Common myeloid progenitor, CD34-positive (primary cell): ENCODE measurements at regions of chr22 and their contacts with region 1.

Region 1: GRCh38 chr22:41666661-41667258 is 21.9 kb downstream of the SNU13 start:
- DNase-seq: peak; percentile 89 to 95 (median 93)
- H3K4me3 ChIP-seq: peak overlapping the region in 4 of 7 experiments; percentile 32 to 73 (median 44)
- H3K27ac ChIP-seq: peak overlapping the region in 1 of 2 experiments; percentile 68
- H3K4me1 ChIP-seq: peaks cover 0 to 9% (median 7%) of the 10 kb centered on the region in 4 experiments
- H3K27me3 ChIP-seq: no peaks in the 10 kb centered on the region

Region 2: GRCh38 chr22:41656556-41656955 is 10.2 kb before region 1 on chr22:
- CTCF ChIA-PET with region 1: interaction called, 22 read pairs
- POLR2A ChIA-PET with region 1: no interaction called
- DNase-seq: no peak
- H3K4me3 ChIP-seq: no peak overlapping the region
- H3K27ac ChIP-seq: no peak overlapping the region
- H3K4me1 ChIP-seq: no peaks in the 10 kb centered on the region
- H3K27me3 ChIP-seq: no peaks in the 10 kb centered on the region

Region 3: GRCh38 chr22:41681616-41682015 is 14.9 kb after region 1 on chr22:
- CTCF ChIA-PET with region 1: interaction called, 12 read pairs
- POLR2A ChIA-PET with region 1: no interaction called
- DNase-seq: peak in 2 of 3 donors; percentile 17 to 27
- H3K4me3 ChIP-seq: peak overlapping the region; percentile 68 to 93 (median 78)
- H3K27ac ChIP-seq: peak overlapping the region; percentile 80 to 91
- H3K4me1 ChIP-seq: peaks cover 0 to 13% (median 4%) of the 10 kb centered on the region in 4 experiments
- H3K27me3 ChIP-seq: no peaks in the 10 kb centered on the region

Region 4: DNA sequence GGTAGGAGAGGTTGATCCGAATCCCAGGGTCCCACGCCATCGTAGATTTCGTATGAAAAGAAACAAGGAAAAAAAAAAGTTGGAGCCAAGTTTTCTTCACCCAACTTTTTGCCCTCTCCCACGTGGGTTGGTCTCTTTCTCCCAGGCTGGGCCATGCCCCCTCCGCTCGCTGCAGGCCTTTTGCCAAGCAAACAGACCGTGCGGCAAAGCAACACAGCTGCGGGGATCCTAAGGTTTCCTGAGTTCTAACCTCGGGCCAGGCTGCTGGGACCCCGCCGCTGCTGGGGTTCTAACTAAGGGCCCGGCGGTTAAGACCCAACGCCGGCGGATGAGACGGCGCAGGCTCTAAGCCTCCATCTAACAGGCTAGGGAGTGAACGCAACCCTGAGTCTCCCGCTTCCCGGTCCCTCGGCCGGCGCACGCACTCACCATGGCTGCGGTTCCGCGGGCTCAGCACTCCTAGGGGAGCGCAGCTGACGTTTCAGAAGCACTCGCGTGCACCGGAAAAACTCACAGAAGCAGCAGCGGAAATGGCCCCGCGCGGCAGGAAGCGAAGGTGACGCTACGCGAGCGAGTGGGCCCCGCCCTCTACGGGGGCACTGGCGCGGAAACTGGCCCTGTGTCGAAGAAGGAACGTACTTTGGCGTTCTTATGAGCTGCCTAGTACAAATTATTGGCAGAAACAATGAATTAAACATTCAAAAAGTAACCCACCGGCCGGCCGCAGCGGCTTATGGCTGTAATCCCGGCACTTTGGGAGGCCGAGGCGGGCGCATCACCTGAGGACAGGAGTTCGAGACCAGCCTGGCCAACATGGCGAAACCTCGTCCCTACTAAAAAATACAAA is 21.8 kb after region 1 on chr22 and contains the start of gene SNU13:
- CTCF ChIA-PET with region 1: interaction called, 11 read pairs
- POLR2A ChIA-PET with region 1: interaction called, 5 read pairs
- DNase-seq: peak; percentile 97 to 98 (median 98)
- H3K4me3 ChIP-seq: peak within 1 kb of the TSS; percentile 64 to 96 (median 84)
- H3K27ac ChIP-seq: peak within 1 kb of the TSS; percentile 95 to 99
- H3K4me1 ChIP-seq: peaks cover 10 to 21% (median 15%) of the 10 kb centered on the region in 4 experiments
- H3K27me3 ChIP-seq: no peaks in the 10 kb centered on the region

Region 5: DNA sequence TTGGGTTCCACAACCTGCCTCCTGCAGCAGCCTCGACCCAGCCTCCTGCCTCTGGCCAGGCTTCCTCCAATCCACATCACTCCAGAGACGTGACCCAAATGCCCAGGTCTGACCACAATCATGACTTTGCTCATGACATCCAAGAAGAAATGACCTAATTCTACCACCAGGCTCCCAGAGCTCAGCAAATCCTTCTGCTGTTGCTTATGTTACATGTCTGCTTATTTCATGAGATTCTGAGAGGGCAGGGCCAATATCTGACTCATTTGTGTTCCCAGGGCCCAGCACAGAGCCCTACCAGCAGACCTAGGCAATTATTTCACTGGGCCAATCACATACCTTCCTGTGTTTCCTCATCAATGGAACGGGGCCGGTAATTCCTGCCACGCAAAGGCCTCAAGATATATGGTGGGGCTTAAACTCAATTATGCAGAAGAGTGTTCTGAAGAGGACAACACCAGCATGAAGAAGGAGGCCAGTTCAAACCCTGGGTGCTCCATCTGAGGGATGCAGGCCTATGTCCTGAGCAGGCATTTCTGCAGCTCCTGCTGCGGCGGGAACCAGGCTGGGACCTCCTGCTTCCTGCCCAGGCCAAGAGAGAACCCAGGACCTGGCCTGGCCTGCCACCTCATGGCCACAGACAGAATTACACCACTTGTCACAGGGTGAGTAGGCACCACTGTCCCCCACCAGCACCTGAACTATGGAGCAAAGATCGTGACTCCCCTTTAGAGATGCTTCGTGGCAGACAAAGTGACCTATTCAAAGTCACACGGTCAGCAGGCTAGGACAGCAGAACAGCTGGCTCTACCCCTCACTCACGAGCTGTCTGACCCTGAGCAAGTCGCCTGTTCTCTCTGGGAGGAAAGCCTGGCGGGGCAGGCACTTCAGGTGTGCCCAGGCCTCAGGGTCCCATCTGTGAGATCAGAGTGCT is 274.3 kb after region 1 on chr22:
- CTCF ChIA-PET with region 1: interaction called, 11 read pairs
- POLR2A ChIA-PET with region 1: no interaction called
- DNase-seq: peak; percentile 79 to 89 (median 87)
- H3K4me3 ChIP-seq: peak overlapping the region in 1 of 7 experiments; percentile 30
- H3K27ac ChIP-seq: peak overlapping the region in 1 of 2 experiments; percentile 54
- H3K4me1 ChIP-seq: peaks cover 0 to 22% (median 14%) of the 10 kb centered on the region in 4 experiments
- H3K27me3 ChIP-seq: no peaks in the 10 kb centered on the region